ENCODE measurements at regions of chr1 and their contacts with region 1.

Region 1: DNA sequence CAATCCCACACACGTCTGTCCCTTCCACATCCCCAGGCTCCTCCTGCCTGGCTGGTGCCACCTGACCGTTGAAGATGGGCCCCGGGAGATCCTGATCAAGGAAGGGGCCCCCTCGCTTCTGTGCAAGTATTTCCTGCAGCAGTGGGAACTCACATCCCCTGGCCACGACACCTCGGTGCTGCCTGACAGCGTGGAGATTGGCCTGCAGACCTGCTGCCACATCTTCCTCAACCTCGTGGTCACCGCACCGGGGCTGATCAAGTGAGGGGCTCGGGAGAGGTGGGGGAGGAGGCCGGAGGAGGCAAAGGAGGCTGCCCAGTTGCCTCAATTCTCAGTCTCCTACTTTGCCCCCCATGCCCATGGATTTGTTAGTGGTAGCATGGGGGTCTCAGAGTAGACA is 5.6 kb downstream of the NCDN start:
- DNase-seq: no peak
- ATAC-seq: no peak

Region 2: DNA sequence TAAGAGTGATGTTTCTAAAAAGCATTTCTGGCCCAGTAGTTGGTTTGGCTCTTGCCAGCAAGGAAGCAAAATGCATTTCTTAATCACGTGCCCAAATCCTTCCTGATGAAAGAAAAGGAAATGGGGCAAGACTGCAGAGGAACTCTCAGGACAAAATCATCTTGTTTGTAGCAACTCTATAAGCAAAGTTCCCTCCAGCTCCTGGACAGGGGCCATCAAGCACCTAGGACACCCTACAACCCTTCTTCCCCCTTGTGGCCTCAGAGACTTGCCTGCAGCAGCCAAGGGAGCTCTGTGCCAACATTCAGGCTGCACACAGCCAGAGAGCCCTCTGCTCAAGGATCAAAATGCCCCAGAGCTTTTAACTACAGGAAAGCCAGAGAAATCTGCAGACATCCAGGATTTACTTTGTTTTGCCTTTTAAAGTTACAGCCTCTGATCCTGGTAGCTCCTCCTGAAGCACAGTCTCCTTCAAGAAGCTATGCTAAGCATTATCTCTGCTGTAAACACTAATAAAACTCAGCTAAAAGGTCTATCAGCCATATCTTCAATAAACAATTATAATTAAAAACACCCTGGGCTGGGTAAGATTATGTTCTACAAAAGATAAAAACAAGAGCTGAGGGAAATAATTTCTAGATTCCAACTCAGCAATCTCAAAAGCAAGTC is 110.9 kb before region 1 on chr1:
- intact Hi-C with region 1: loop called (anchors 2 kb)
- DNase-seq: no peak
- ATAC-seq: peak; percentile 48

Region 3: GRCh38 chr1:35524106-35524505 is 39.1 kb before region 1 on chr1:
- intact Hi-C with region 1: no loop called
- DNase-seq: no peak
- ATAC-seq: no peak

Region 4: DNA sequence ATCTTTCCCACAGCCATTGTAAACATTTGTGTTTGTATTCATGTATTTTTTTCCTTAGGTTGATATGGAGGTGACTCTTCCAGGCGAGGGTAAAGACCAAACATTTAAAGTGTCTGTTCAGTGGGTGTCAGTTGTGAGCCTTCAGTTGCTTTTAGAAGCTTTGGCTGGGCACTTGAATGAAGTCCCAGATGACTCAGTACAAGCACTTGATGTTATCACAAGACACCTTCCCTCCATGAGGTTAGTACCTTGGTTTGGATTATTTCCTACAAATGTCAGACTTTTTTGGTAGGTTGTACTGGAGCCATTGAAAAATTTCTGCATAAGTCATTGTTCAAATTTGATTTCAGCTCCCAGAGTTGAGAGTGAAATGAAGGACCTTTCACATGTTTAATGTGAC is 262.1 kb after region 1 on chr1:
- intact Hi-C with region 1: no loop called
- DNase-seq: no peak
- ATAC-seq: no peak